Heart right ventricle (tissue), 16 donors: ENCODE measurements at regions of chr15 and their contacts with region 1.

Region 1: GRCh38 chr15:56821721-56822425 is 88.6 kb upstream of the ZNF280D start:
- DNase-seq: peak; percentile 40 to 48
- ATAC-seq: peak in 7 of 8 donors; percentile 67 to 89 (median 86)
- H3K4me3 ChIP-seq: no peak overlapping the region
- H3K27ac ChIP-seq: no peak overlapping the region
- H3K4me1 ChIP-seq: peaks cover 0 to 26% (median 14%) of the 10 kb centered on the region in 9 donors
- H3K27me3 ChIP-seq: no peaks in the 10 kb centered on the region
- CTCF ChIP-seq: peak; percentile 45 to 78 (median 68)

Region 2: GRCh38 chr15:56496635-56497034 is 325.2 kb before region 1 on chr15:
- intact Hi-C with region 1: loop called in 1 of 10 experiments (anchors 5 kb)
- DNase-seq: peak in 1 of 2 donors; percentile 6
- ATAC-seq: peak in 6 of 8 donors; percentile 61 to 85 (median 80)
- H3K4me3 ChIP-seq: no peak overlapping the region
- H3K27ac ChIP-seq: no peak overlapping the region
- H3K4me1 ChIP-seq: peaks cover 0 to 4% (median 0%) of the 10 kb centered on the region in 9 donors
- H3K27me3 ChIP-seq: peaks cover 0 to 5% (median 0%) of the 10 kb centered on the region in 7 donors
- CTCF ChIP-seq: peak; percentile 24 to 85 (median 75)

Region 3: GRCh38 chr15:56732921-56733797 is 88.7 kb before region 1 on chr15 and contains the start of gene ZNF280D:
- intact Hi-C with region 1: loop called in 1 of 10 experiments (anchors 10 kb)
- DNase-seq: peak; percentile 93
- ATAC-seq: peak; percentile 94 to 97 (median 96)
- H3K4me3 ChIP-seq: peak within 1 kb of the TSS; percentile 63 to 76 (median 69)
- H3K27ac ChIP-seq: peak within 1 kb of the TSS; percentile 96 to 99 (median 98)
- H3K4me1 ChIP-seq: peaks cover 0 to 62% (median 35%) of the 10 kb centered on the region in 9 donors
- H3K27me3 ChIP-seq: no peaks in the 10 kb centered on the region
- CTCF ChIP-seq: no peak
- total RNA-seq, gene ZNF280D: 20.0 to 30.9 (median 24.9) TPM

Region 4: GRCh38 chr15:56835718-56836171 is 13.9 kb after region 1 on chr15:
- intact Hi-C with region 1: no loop called
- DNase-seq: peak in 1 of 2 donors; percentile 48
- ATAC-seq: peak; percentile 17 to 81 (median 59)
- H3K4me3 ChIP-seq: no peak overlapping the region
- H3K27ac ChIP-seq: no peak overlapping the region
- H3K4me1 ChIP-seq: peaks cover 0 to 25% (median 15%) of the 10 kb centered on the region in 9 donors
- H3K27me3 ChIP-seq: no peaks in the 10 kb centered on the region
- CTCF ChIP-seq: no peak

Region 5: DNA sequence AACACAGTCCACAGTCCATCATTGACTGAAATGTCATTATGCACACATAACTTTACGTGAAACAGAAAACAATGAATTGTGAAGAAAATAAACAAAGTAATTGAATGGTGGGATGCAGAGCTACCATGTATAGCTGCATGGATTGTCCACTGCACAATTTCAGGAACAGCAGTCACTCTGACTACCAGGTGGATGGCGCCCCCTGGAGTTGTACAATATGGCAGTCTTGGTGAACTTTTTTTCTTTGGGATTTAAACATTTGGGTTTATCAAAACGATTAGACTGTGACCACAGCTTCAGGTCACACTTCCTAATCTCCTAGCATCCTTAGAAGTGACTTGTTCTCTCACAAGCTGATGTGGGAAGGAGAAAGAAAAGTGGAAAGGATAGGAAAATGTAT is 47.7 kb after region 1 on chr15:
- intact Hi-C with region 1: loop called in 2 of 10 experiments (anchors 5 to 10 kb)
- DNase-seq: peak; percentile 24 to 36
- ATAC-seq: no peak
- H3K4me3 ChIP-seq: no peak overlapping the region
- H3K27ac ChIP-seq: no peak overlapping the region
- H3K4me1 ChIP-seq: peaks cover 0 to 9% (median 0%) of the 10 kb centered on the region in 9 donors
- H3K27me3 ChIP-seq: no peaks in the 10 kb centered on the region
- CTCF ChIP-seq: peak in 8 of 9 donors; percentile 25 to 69 (median 58)

Region 6: DNA sequence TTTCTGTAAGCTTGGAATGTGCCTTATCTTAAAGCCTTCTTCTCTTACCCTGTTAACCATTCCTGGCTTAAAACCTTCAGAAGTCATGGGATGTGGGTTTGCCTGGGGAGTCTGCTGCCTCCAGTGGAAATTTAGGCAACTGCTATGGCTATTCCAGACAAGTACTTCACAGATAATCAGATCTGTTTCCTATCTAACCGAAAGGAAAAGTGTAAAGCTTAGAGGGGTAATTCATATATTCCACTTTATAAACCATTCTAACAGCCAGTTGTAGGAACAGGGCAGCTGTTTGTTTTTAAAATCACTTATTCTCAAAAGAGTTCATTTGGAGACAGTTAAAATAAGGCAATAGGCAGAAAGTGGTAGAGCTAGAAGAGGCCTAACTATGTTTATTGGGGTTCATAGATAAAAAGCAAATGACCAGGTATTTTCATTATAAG is 316.5 kb after region 1 on chr15:
- intact Hi-C with region 1: loop called in 8 of 10 experiments (anchors 5 to 10 kb)
- DNase-seq: peak in 1 of 2 donors; percentile 42
- ATAC-seq: peak; percentile 25 to 81 (median 71)
- H3K4me3 ChIP-seq: no peak overlapping the region
- H3K27ac ChIP-seq: no peak overlapping the region
- H3K4me1 ChIP-seq: peaks cover 0 to 48% (median 42%) of the 10 kb centered on the region in 9 donors
- H3K27me3 ChIP-seq: no peaks in the 10 kb centered on the region
- CTCF ChIP-seq: peak; percentile 70 to 88 (median 78)

Region 7: DNA sequence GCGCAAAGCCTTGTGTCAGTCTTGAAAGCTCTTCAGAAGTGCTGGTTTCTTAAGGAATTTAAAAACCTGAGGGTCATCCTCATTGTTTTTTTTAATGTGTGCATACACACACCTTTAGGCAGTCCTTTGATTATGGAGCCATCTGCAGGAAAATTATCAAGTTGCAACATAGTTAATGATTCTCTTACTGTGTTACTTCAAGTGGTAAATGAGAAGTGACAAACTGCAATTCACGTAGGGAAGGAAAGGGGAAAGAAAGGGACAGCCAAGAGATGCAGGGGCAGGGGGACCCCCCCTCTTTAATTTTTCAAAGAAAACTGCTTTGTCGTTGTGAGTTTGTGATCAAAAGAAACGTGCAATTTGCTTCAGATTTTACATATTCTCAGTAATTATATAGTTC is 392.0 kb after region 1 on chr15:
- intact Hi-C with region 1: loop called in 7 of 10 experiments (anchors 5 to 10 kb)
- DNase-seq: peak in 1 of 2 donors; percentile 9
- ATAC-seq: peak; percentile 47 to 82 (median 76)
- H3K4me3 ChIP-seq: no peak overlapping the region
- H3K27ac ChIP-seq: no peak overlapping the region
- H3K4me1 ChIP-seq: peaks cover 3 to 56% (median 25%) of the 10 kb centered on the region in 9 donors
- H3K27me3 ChIP-seq: no peaks in the 10 kb centered on the region
- CTCF ChIP-seq: peak; percentile 39 to 79 (median 62)

Region 8: GRCh38 chr15:57306161-57306943 is 484.5 kb after region 1 on chr15:
- intact Hi-C with region 1: loop called in 7 of 10 experiments (anchors 5 to 10 kb)
- DNase-seq: peak; percentile 87 to 92
- ATAC-seq: peak; percentile 88 to 95 (median 91)
- H3K4me3 ChIP-seq: peak overlapping the region; percentile 19 to 84 (median 58)
- H3K27ac ChIP-seq: peak overlapping the region in 6 of 10 donors; percentile 30 to 54 (median 34)
- H3K4me1 ChIP-seq: peaks cover 0 to 18% (median 12%) of the 10 kb centered on the region in 9 donors
- H3K27me3 ChIP-seq: no peaks in the 10 kb centered on the region
- CTCF ChIP-seq: peak; percentile 82 to 96 (median 91)